ENCODE measurements at regions of chr2 and their contacts with region 1.

Region 1: GRCh38 chr2:203934041-203934492 is 2.5 kb upstream of the ICOS start:
- DNase-seq: peak; percentile 52
- H3K4me3 Mint-ChIP-seq: peak overlapping the region; percentile 47
- H3K27ac Mint-ChIP-seq: peak overlapping the region; percentile 86
- H3K4me1 Mint-ChIP-seq: peaks cover 41% of the 10 kb centered on the region
- H3K27me3 Mint-ChIP-seq: no peaks in the 10 kb centered on the region

Region 2: DNA sequence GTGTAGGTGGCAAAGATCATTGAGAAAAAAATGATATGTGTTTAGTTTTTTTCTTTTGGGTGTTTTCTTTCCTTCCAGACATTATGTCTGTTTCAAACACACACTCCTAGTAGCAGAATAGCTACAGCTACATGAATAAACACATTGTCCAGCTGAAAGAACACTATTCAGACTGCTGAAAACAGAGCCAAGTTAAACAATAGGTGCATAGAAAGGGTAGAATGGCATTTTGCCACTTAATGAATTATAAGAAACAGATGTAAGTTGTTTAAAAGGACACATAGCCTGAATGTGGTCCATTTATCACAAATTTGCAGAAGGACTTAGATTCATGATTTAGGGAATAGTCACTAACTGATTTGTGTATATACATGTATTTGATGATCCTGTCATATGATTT is 46.4 kb before region 1 on chr2:
- CTCF ChIA-PET with region 1: no interaction called
- POLR2A ChIA-PET with region 1: interaction called, 22 read pairs
- DNase-seq: no peak
- H3K4me3 Mint-ChIP-seq: no peak overlapping the region
- H3K27ac Mint-ChIP-seq: peak overlapping the region; percentile 83
- H3K4me1 Mint-ChIP-seq: peaks cover 80% of the 10 kb centered on the region
- H3K27me3 Mint-ChIP-seq: no peaks in the 10 kb centered on the region

Region 3: GRCh38 chr2:203972066-203972465 is 38.0 kb after region 1 on chr2:
- CTCF ChIA-PET with region 1: no interaction called
- POLR2A ChIA-PET with region 1: no interaction called
- DNase-seq: no peak
- H3K4me3 Mint-ChIP-seq: no peak overlapping the region
- H3K27ac Mint-ChIP-seq: no peak overlapping the region
- H3K4me1 Mint-ChIP-seq: peaks cover 15% of the 10 kb centered on the region
- H3K27me3 Mint-ChIP-seq: peaks cover 4% of the 10 kb centered on the region

Region 4: GRCh38 chr2:203988500-203989260 is 54.6 kb after region 1 on chr2:
- CTCF ChIA-PET with region 1: no interaction called
- POLR2A ChIA-PET with region 1: interaction called, 19 read pairs
- DNase-seq: no peak
- H3K4me3 Mint-ChIP-seq: no peak overlapping the region
- H3K27ac Mint-ChIP-seq: peak overlapping the region; percentile 59
- H3K4me1 Mint-ChIP-seq: peaks cover 35% of the 10 kb centered on the region
- H3K27me3 Mint-ChIP-seq: no peaks in the 10 kb centered on the region

Region 5: GRCh38 chr2:204005940-204006721 is 72.1 kb after region 1 on chr2:
- CTCF ChIA-PET with region 1: no interaction called
- POLR2A ChIA-PET with region 1: interaction called, 13 read pairs
- DNase-seq: no peak
- H3K4me3 Mint-ChIP-seq: no peak overlapping the region
- H3K27ac Mint-ChIP-seq: peak overlapping the region; percentile 79
- H3K4me1 Mint-ChIP-seq: peaks cover 76% of the 10 kb centered on the region
- H3K27me3 Mint-ChIP-seq: no peaks in the 10 kb centered on the region

Measured in activated CD4-positive, alpha-beta memory T cell treated with anti-CD3 and anti-CD28 coated beads, Interleukin-2, amount 10 ng/mL, durations not matched to agents 7 days and 5 days (primary cell).